Activated naive CD4-positive, alpha-beta T cell treated with anti-CD3 and anti-CD28 coated beads for 36 hours (primary cell): ENCODE measurements at regions of chr5 and their contacts with region 1.

Region 1: DNA sequence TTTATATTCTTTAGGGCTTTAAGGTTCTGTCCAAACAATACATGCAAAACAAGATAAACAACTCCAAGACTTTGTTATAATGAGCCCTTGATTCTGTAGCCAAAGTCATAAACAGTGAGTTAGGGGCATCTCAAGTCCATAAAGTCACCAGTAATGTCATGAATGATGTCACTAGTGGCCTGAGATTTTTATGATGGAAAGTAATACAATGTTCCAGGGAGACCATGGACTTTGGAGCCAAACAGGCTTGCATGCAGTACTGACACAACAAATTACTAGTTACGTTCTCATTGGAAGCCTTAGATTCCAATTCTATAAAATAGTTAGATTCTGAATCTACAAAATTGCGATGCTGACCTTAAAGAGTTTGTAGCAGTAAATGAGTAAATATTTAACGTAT is 280.0 kb downstream of the HINT1 start:
- DNase-seq: no peak
- H3K4me3 Mint-ChIP-seq: no peak overlapping the region
- H3K27ac Mint-ChIP-seq: no peak overlapping the region
- H3K4me1 Mint-ChIP-seq: peaks cover 5% of the 10 kb centered on the region
- H3K27me3 Mint-ChIP-seq: peaks cover 3% of the 10 kb centered on the region

Region 2: GRCh38 chr5:130871346-130872086 is 13.5 kb before region 1 on chr5:
- CTCF ChIA-PET with region 1: interaction called, 11 read pairs
- intact Hi-C with region 1: no loop called
- DNase-seq: peak; percentile 53
- H3K4me3 Mint-ChIP-seq: no peak overlapping the region
- H3K27ac Mint-ChIP-seq: no peak overlapping the region
- H3K4me1 Mint-ChIP-seq: no peaks in the 10 kb centered on the region
- H3K27me3 Mint-ChIP-seq: no peaks in the 10 kb centered on the region